HCT116 (cell line): ENCODE measurements at regions of chr1 and their contacts with region 1.

Region 1: DNA sequence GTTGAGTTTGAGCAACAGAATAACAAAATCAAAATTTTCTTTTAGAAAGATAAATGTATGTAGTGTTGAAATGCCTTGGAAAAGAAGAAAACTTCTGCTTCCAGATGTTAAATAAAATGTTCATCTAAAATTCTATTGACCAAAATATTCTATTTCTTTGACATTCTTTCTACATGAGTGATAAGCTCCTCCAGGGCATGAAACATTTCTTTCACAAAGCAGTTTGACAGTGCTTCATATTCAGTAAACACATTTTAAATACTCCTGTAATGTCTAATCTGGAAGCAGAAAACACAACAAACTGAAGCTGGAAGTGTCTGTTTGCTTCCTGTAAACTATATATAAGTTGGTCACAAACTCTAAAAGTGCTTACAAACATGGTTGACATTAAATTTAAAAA is 61.5 kb downstream of the RGS21 start:
- DNase-seq: no peak
- ATAC-seq: no peak
- H3K4me3 ChIP-seq: no peak overlapping the region
- H3K27ac ChIP-seq: no peak overlapping the region
- H3K4me1 ChIP-seq: no peaks in the 10 kb centered on the region
- H3K27me3 ChIP-seq: no peaks in the 10 kb centered on the region
- CTCF ChIP-seq: no peak
- POLR2A ChIP-seq: no peak
- RAD21 ChIP-seq: no peak

Region 2: GRCh38 chr1:192342842-192343241 is 35.4 kb before region 1 on chr1:
- CTCF ChIA-PET with region 1: no interaction called
- POLR2A ChIA-PET with region 1: no interaction called
- RAD21 ChIA-PET with region 1: no interaction called
- intact Hi-C with region 1: no loop called
- DNase-seq: no peak
- ATAC-seq: no peak
- H3K4me3 ChIP-seq: no peak overlapping the region
- H3K27ac ChIP-seq: no peak overlapping the region
- H3K4me1 ChIP-seq: no peaks in the 10 kb centered on the region
- H3K27me3 ChIP-seq: no peaks in the 10 kb centered on the region
- CTCF ChIP-seq: no peak
- POLR2A ChIP-seq: no peak
- RAD21 ChIP-seq: no peak

Region 3: GRCh38 chr1:193700710-193701355 is 1322.6 kb after region 1 on chr1:
- CTCF ChIA-PET with region 1: no interaction called
- POLR2A ChIA-PET with region 1: no interaction called
- RAD21 ChIA-PET with region 1: no interaction called
- intact Hi-C with region 1: loop called (anchors 5 kb)
- DNase-seq: peak; percentile 56
- ATAC-seq: peak; percentile 90
- H3K4me3 ChIP-seq: no peak overlapping the region
- H3K27ac ChIP-seq: no peak overlapping the region
- H3K4me1 ChIP-seq: peaks cover 8 to 21% of the 10 kb centered on the region in 2 experiments
- H3K27me3 ChIP-seq: no peaks in the 10 kb centered on the region
- CTCF ChIP-seq: no peak
- POLR2A ChIP-seq: no peak
- RAD21 ChIP-seq: no peak; the same call in 1 of the 2 replicates